Dorsolateral prefrontal cortex (tissue), 120 donors: ENCODE measurements at regions of chr19 and their contacts with region 1.

Region 1: DNA sequence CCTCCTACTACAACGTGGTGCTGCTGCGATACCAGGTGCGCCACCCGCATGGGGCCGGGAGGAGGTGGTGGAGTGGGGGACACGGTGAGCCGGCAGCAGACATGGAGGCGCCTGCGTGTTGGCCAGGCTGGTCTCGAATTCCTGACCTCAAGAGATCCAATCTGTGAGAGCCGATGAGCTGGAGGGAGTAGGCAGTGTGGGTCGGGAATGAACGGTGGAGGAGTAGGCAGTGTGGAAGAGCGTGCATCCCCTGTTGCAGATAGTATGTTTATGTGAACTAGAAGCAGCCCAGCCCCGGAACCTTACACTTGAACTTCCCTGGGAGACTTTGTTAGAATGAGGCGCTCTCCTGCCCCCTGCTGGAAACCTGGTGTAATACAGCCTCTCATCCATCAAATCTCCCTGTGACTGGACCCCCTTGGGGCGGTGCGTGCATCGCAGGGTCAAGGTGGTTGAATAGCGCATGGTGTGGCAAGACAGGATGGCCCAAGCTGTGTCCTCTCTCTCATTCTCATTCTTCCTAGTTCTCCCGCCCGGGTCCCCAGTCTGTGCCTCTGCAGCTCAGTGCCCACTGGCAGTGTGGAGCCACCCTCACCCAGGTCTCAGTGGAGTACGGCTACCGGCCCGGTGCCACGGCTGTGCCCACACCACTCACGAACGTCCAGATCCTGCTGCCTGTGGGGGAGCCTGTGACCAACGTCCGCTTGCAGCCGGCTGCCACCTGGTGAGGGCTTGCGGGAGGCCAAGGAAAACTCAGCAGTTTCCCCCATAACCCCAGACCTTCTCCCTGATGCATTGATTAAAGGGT is 10.5 kb upstream of the B3GNT3 start:
- DNase-seq: peak; percentile 46 to 80 (median 71)
- H3K4me3 ChIP-seq: no peak overlapping the region
- H3K27ac ChIP-seq: peak overlapping the region in 13 of 59 donors; percentile 17 to 58 (median 44)
- H3K27me3 ChIP-seq: no peaks in the 10 kb centered on the region
- CTCF ChIP-seq: peak; percentile 71 to 93 (median 83)

Region 2: DNA sequence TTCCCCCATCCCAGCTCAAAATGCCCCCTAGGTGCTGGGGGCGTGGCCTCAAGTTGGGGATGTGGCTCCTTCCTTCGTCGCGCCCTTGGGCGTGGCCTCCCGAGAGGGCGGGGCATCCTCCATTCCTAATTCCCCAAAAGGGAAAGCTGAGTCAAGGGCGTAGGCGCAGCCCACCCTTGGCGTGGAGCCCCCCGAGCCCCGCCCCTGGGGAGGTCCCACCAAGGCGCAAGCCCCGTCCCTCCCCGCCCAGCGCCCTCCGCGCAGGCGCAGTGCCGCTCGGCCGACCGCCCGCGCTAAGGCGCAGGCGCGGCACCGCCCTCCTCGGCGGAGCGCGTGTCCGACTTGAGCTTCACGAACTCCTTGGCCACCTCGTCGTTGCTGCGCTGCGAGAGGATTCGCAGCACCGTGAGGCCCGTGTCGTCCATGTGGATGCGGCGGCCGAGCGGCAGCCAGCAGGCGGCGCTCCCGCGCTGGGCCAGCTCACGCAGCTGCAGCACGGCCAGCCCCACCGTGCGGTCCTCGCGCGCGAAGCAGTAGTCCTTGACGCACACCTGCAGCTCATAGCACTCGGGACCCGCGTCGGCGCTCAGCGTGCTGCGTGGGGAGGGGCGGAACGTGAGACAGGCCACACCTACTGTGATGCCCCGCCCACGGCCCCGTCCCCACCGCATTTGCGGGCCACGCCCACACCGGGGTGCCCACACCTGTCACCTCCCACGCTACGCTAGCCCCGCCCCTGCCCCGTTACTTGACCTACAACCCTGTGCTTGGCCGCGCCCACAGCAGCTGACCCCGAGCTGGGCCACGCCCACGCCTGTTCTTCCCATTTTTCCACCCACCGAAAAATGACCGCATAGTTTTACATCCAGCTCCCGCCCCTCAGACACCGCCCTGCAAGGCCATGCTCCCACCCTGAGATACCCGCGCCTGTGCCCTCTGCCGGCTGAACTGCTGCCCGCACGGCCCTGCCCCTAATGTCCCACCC is 178.4 kb before region 1 on chr19:
- intact Hi-C with region 1: loop called in 1 of 2 experiments (anchors 10 kb)
- DNase-seq: peak; percentile 40 to 80 (median 61)
- H3K4me3 ChIP-seq: peak overlapping the region in 58 of 59 donors; percentile 10 to 62 (median 47)
- H3K27ac ChIP-seq: peak overlapping the region in 25 of 59 donors; percentile 3 to 72 (median 40)
- H3K27me3 ChIP-seq: peaks cover 0 to 23% (median 0%) of the 10 kb centered on the region in 45 donors
- CTCF ChIP-seq: peak; percentile 19 to 80 (median 61)

Region 3: GRCh38 chr19:17706750-17707181 is 77.6 kb before region 1 on chr19:
- intact Hi-C with region 1: no loop called
- DNase-seq: peak; percentile 53 to 89 (median 77)
- H3K4me3 ChIP-seq: peak overlapping the region in 27 of 59 donors; percentile 4 to 54 (median 35)
- H3K27ac ChIP-seq: no peak overlapping the region
- H3K27me3 ChIP-seq: no peaks in the 10 kb centered on the region
- CTCF ChIP-seq: no peak

Region 4: GRCh38 chr19:17854061-17854460 is 69.7 kb after region 1 on chr19:
- intact Hi-C with region 1: loop called in 1 of 2 experiments (anchors 5 kb)
- DNase-seq: no peak
- H3K4me3 ChIP-seq: no peak overlapping the region
- H3K27ac ChIP-seq: no peak overlapping the region
- H3K27me3 ChIP-seq: no peaks in the 10 kb centered on the region
- CTCF ChIP-seq: no peak